BJ (cell line): ENCODE measurements at regions of chr16 and their contacts with region 1.

Region 1: GRCh38 chr16:67816240-67817031 is 9.7 kb downstream of the TSNAXIP1 start:
- DNase-seq: no peak
- H3K4me3 ChIP-seq: no peak overlapping the region
- H3K27me3 ChIP-seq: no peaks in the 10 kb centered on the region
- CTCF ChIP-seq: peak; percentile 100

Region 2: GRCh38 chr16:67504041-67505021 is 312.1 kb before region 1 on chr16:
- CTCF ChIA-PET with region 1: no interaction called
- POLR2A ChIA-PET with region 1: no interaction called
- DNase-seq: no peak
- H3K4me3 ChIP-seq: no peak overlapping the region
- H3K27me3 ChIP-seq: no peaks in the 10 kb centered on the region
- CTCF ChIP-seq: no peak

Region 3: GRCh38 chr16:67672739-67673662 is 143.4 kb before region 1 on chr16:
- CTCF ChIA-PET with region 1: interaction called, 30 read pairs
- POLR2A ChIA-PET with region 1: no interaction called
- DNase-seq: no peak
- H3K4me3 ChIP-seq: no peak overlapping the region
- H3K27me3 ChIP-seq: no peaks in the 10 kb centered on the region
- CTCF ChIP-seq: peak; percentile 89

Region 4: GRCh38 chr16:67760206-67760955 is 56.1 kb before region 1 on chr16:
- CTCF ChIA-PET with region 1: no interaction called
- POLR2A ChIA-PET with region 1: no interaction called
- DNase-seq: no peak
- H3K4me3 ChIP-seq: no peak overlapping the region
- H3K27me3 ChIP-seq: no peaks in the 10 kb centered on the region
- CTCF ChIP-seq: no peak

Region 5: GRCh38 chr16:67775273-67775672 is 41.2 kb before region 1 on chr16:
- CTCF ChIA-PET with region 1: no interaction called
- POLR2A ChIA-PET with region 1: no interaction called
- DNase-seq: no peak
- H3K4me3 ChIP-seq: no peak overlapping the region
- H3K27me3 ChIP-seq: no peaks in the 10 kb centered on the region
- CTCF ChIP-seq: no peak

Region 6: DNA sequence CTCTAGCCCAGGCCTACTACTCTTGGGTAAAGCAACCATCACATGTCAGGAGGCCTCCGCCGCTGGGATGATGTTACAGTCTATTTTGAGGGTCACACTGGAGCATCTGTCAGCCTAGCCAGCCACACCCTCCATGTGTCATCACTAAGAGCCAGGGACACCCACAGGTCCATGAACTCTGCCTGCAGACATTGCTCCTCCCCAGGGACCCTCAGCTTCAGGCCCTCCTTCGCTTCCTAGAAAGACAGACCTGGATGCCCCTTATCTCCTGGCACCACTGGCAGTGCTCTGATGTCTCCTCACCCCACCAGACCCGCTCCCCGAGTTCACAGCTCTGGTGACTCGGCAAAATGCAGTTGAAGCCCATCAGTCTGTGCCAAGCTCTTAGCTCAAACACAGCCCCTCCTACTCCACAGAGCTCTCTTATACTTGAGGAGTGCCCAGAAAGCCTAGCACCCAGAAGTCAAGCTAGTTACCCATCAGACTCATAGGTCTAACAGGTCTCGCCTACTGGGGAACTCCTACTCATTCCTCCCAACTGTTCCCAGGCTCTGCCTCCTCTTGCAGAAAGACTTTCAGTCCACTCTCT is 16.0 kb before region 1 on chr16:
- CTCF ChIA-PET with region 1: interaction called, 19 read pairs
- POLR2A ChIA-PET with region 1: no interaction called
- DNase-seq: no peak
- H3K4me3 ChIP-seq: no peak overlapping the region
- H3K27me3 ChIP-seq: no peaks in the 10 kb centered on the region
- CTCF ChIP-seq: no peak

Region 7: DNA sequence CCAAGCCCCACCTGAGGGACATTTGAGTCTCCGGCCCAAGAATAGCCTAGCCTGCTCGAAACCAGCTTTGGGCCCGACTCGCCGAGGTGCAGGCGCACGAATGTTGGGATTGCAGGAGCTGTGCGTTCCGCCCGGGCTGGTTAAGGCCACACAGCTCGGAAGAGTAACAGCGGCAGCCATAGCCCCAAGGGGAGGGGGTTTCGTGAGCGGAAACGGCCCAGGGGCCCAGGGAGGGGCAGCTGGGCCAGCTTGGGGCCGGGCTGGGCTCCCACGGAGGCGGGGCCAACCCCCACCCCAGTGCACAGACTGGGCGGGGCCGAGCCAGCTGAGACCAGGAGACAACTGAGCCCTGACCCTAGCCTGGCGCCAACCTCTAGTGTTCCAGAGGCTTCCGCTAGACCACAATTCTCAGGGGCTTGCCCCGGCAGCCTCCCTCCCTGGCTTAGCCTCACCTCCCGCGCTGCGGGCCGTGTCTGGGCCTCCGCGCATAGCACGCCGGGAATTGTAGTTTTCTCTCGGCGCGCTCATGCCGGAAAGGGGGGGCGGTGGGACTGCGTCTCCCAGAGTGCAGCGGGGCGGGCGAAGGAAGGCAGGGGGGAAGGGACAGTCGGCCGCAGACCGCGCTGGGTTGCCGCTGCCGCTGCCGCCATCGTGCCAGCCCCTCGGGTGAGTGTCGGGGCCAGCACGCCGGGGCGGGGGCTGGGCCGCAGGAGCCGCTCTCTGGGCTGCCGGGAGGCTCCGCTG is 30.1 kb after region 1 on chr16 and contains the start of gene NUTF2:
- CTCF ChIA-PET with region 1: interaction called, 11 read pairs
- POLR2A ChIA-PET with region 1: no interaction called
- DNase-seq: peak; percentile 52
- H3K4me3 ChIP-seq: peak within 1 kb of the TSS; percentile 69
- H3K27me3 ChIP-seq: no peaks in the 10 kb centered on the region
- CTCF ChIP-seq: no peak
- polyA plus RNA-seq, gene NUTF2: 173 and 230 TPM in 2 replicates

Region 8: GRCh38 chr16:67928561-67929364 is 112.3 kb after region 1 on chr16:
- CTCF ChIA-PET with region 1: interaction called, 38 read pairs
- POLR2A ChIA-PET with region 1: no interaction called
- DNase-seq: no peak
- H3K4me3 ChIP-seq: no peak overlapping the region
- H3K27me3 ChIP-seq: no peaks in the 10 kb centered on the region
- CTCF ChIP-seq: peak; percentile 93

Region 9: DNA sequence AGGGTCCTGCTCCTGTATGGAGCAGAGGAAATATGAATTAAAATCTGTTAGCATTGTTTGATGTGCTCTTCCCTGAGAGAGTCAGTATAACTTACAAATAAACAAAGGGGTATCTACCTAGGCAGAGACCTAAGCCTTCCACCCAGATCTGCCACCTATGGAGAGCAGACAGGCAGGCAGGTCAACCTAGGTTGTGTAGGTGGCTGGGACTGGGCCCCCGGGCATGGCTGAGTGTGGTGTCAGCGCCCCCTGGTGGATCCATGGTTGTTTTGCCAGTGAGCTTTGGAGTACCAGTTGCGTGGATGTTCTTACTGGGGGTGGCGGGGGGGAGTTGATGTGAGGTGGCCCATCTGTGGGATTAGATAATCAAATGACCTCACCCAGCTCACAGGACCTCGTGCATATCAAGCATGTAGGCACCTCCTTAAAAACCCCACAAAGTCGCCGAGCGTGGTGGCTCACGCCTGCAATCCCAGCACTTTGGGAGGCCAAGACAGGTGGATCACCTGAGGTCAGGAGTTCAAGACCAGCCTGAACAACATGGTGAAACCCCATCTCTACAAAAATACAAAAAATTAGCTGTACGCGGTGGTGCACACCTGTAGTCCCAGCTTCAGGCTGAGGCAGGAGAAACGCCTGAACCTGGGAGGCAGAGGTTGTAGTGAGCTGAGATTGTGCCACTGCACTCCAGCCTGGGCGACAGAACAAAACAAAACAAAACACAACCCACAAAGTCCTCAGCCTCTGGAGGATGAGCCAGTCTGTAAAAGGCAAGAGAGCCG is 224.3 kb after region 1 on chr16:
- CTCF ChIA-PET with region 1: interaction called, 17 read pairs
- POLR2A ChIA-PET with region 1: no interaction called
- DNase-seq: no peak
- H3K4me3 ChIP-seq: no peak overlapping the region
- H3K27me3 ChIP-seq: no peaks in the 10 kb centered on the region
- CTCF ChIP-seq: peak; percentile 85